ENCODE measurements at regions of chr3 and their contacts with region 1.

Region 1: GRCh38 chr3:163601426-163601825 is 1476.9 kb downstream of the SI start:
- DNase-seq: no peak
- ATAC-seq: no peak
- H3K4me3 ChIP-seq: no peak overlapping the region
- H3K27ac ChIP-seq: no peak overlapping the region
- H3K4me1 ChIP-seq: no peaks in the 10 kb centered on the region
- H3K27me3 ChIP-seq: no peaks in the 10 kb centered on the region
- CTCF ChIP-seq: no peak

Region 2: DNA sequence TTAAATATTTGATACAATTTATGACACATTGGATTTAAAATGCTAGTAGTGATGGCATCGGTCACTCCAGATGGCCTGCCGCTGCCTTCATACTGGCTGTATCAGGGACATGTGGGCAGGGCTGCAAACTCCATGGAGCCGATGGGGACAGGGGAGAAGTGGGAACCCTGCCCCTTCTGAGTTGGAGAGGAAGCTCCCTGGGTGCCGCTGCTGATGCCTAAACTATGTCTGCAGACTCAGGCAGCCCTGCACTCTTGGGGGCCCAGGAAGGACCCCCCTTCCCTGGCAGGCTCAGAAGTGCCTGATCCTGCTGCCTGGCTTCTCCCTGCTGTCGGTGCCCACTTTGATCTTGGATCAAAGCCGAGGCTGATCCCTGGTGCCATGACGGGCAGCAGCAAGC is 582.8 kb before region 1 on chr3:
- CTCF ChIA-PET with region 1: no interaction called
- POLR2A ChIA-PET with region 1: interaction called, 16 read pairs
- in situ Hi-C with region 1: no loop called
- intact Hi-C with region 1: no loop called
- DNase-seq: no peak
- ATAC-seq: no peak
- H3K4me3 ChIP-seq: no peak overlapping the region
- H3K27ac ChIP-seq: no peak overlapping the region
- H3K4me1 ChIP-seq: no peaks in the 10 kb centered on the region
- H3K27me3 ChIP-seq: no peaks in the 10 kb centered on the region
- CTCF ChIP-seq: no peak

Region 3: DNA sequence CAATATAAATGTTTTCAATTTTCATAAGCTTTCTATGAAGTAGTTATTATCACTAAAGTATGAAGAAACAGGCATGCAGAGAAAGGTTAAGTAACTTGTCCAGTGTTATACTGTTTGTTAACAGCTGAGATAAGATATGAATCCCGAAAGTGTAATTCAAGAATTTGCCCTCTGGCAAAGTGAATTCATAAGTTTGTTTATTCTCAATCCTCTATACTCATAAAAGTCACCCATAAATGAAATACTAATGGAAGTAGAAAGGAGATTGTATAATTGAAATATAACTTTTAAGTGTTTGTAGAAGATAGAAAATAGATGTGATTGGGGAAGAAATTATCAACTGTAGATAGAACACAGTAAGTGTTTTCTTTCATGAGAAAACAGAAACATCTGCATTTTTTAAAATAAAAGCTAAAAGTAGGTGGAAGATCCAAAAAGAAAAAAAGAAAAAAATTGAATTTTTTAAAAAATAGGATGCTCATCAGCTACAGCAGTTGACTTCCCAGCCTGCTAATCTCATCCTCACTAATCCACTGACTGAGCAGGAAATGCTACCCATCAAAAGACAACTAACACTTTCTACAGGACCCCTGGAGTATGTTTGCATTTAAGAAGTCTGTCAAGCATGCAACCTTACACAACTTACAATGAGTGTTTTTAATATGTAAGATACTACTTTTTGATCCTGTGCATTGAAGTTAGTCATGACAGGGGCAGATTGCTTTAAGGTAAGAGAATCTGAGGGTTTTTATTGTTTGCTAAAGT is 598.8 kb after region 1 on chr3:
- CTCF ChIA-PET with region 1: no interaction called
- POLR2A ChIA-PET with region 1: no interaction called
- in situ Hi-C with region 1: no loop called
- intact Hi-C with region 1: no loop called
- DNase-seq: no peak
- ATAC-seq: no peak
- H3K4me3 ChIP-seq: no peak overlapping the region
- H3K27ac ChIP-seq: no peak overlapping the region
- H3K4me1 ChIP-seq: no peaks in the 10 kb centered on the region
- H3K27me3 ChIP-seq: no peaks in the 10 kb centered on the region
- CTCF ChIP-seq: no peak

Measured in Panc1 (cell line).